T-cell (primary cell): ENCODE measurements at regions of chr12 and their contacts with region 1.

Region 1: GRCh38 chr12:701896-702539 is 38.8 kb upstream of the NINJ2 start:
- DNase-seq: no peak
- ATAC-seq: no peak
- H3K4me3 ChIP-seq: no peak overlapping the region
- H3K4me3 Mint-ChIP-seq: no peak overlapping the region
- H3K27ac ChIP-seq: no peak overlapping the region
- H3K27ac Mint-ChIP-seq: no peak overlapping the region
- H3K4me1 ChIP-seq: peaks cover 5% of the 10 kb centered on the region in 2 experiments
- H3K4me1 Mint-ChIP-seq: peaks cover 18 to 27% (median 19%) of the 10 kb centered on the region in 3 donors
- H3K27me3 ChIP-seq: no peaks in the 10 kb centered on the region
- H3K27me3 Mint-ChIP-seq: no peaks in the 10 kb centered on the region

Region 2: GRCh38 chr12:720231-720941 is 18.4 kb after region 1 on chr12:
- CTCF ChIA-PET with region 1: no interaction called
- POLR2A ChIA-PET with region 1: interaction called in 1 of 2 experiments, 13 read pairs
- DNase-seq: no peak
- ATAC-seq: no peak
- H3K4me3 ChIP-seq: no peak overlapping the region
- H3K4me3 Mint-ChIP-seq: peak overlapping the region; percentile 1 to 69 (median 66)
- H3K27ac ChIP-seq: no peak overlapping the region
- H3K27ac Mint-ChIP-seq: peak overlapping the region; percentile 6 to 31
- H3K4me1 ChIP-seq: peaks cover 26 to 40% of the 10 kb centered on the region in 2 experiments
- H3K4me1 Mint-ChIP-seq: peaks cover 56 to 74% (median 58%) of the 10 kb centered on the region in 3 donors
- H3K27me3 ChIP-seq: no peaks in the 10 kb centered on the region
- H3K27me3 Mint-ChIP-seq: no peaks in the 10 kb centered on the region